ENCODE measurements at regions of chr10 and their contacts with region 1.

Region 1: DNA sequence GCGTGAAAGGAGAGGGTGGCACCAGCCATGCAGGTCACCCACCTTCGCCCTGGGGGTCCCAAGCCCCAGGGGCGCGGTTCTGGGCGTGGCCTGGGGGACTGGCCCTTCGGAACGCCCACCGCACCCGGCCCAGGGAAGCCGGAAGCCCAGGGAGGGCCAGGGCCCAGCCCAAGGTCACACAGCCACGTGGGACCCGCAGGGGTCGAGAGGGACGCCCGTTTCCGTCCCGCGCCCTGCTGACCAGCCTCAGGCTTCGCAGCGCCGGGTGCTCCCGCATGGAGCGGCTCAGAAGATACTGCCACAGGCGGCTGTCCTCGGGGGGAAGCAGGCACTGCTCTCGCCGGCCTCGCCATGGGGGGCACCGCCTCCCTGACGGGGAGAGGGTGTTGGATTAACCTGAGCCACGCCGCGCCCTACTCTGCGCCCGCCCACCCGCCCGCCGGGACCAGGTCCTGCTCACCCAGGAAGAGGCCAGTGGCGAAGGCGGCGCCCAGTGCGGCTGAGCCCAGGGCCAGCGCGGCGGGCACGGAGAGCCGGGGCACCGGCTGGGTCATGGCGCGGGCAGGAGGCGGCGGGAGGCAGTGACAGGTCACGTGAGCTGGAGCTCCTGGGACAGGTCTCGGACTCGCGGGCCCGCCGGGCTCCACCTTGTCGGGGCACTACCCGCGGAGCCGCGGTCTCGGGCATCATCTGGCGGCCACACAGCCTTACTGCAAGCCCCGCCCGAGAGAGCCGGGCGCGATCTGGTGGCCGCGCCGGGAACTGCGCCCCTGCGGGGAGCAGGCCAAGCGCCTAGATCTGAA is at the start of gene COMTD1:
- DNase-seq: peak; percentile 91
- H3K4me3 Mint-ChIP-seq: peak within 1 kb of the TSS; percentile 84
- H3K27ac Mint-ChIP-seq: peak within 1 kb of the TSS; percentile 93
- H3K4me1 Mint-ChIP-seq: peaks cover 27% of the 10 kb centered on the region
- H3K27me3 Mint-ChIP-seq: no peaks in the 10 kb centered on the region
- total RNA-seq, gene COMTD1: 36.4 and 36.9 TPM in 2 replicates

Region 2: DNA sequence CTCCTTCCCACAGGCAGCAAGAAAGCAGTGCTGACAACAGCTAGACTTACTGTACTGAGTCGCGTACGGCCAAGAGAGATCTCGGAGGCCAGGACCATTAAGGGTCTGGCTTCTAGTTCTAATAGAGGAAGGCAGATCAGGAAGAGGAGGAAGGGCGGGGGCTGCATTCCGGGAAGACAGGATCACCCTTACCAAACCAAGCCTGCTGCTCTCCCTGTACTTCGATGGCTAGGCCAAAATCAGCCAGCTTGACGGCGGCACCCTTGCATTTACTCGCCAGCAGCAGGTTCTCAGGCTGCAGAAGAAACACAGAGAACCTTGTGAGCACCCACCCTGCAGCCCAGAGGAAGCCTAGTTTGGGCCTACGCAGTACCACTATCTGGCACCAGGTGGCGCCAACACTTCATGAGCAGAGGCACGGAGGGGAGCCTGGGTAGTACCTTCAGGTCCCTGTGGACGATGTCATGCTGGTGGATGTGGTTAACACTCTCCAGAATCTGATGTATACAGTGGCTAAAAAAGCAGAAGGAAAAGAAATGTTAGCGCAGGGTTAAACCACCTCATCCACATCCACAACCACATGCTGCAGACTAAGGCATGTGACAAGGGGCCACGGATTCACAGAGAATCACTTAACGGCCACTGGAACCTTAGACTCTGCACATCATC is 1386.6 kb before region 1 on chr10:
- intact Hi-C with region 1: loop called (anchors 1 kb)
- DNase-seq: peak; percentile 88
- H3K4me3 Mint-ChIP-seq: peak overlapping the region; percentile 64
- H3K27ac Mint-ChIP-seq: peak overlapping the region; percentile 78
- H3K4me1 Mint-ChIP-seq: peaks cover 13% of the 10 kb centered on the region
- H3K27me3 Mint-ChIP-seq: peaks cover 1% of the 10 kb centered on the region

Region 3: DNA sequence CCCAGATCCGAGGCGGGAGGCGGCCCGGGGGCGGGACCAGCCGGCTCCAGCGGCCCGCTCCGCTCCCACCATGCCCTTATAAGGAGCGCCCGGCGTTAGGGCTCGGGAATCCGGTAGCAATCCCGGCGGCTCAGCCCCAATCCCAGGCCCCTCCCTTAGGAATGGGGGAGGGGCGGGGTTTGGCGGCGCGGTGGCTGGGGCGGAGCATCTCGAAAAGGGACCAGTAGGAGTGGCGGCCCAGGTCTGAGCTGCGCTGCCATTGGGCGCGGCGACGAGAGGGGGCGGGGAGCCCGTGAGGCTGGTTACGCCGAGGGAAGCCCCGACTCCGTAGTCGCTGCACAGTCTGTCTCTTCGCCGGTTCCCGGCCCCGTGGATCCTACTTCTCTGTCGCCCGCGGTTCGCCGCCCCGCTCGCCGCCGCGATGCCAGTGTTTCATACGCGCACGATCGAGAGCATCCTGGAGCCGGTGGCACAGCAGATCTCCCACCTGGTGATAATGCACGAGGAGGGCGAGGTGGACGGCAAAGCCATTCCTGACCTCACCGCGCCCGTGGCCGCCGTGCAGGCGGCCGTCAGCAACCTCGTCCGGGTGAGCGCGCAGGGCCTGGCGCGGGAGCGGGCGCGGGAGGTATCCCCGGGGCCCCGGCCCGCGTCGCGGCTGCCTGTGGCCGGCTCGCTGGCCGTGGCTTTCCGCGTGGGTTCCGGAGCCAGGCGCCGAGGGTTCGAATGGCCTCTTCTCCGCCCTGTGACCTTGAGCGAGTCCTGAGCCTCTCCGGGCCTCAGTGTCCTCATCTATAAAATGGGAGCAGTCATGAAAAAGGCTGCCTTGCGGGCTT is 1237.6 kb before region 1 on chr10 and contains the start of gene VCL:
- intact Hi-C with region 1: loop called (anchors 5 kb)
- DNase-seq: peak; percentile 95
- H3K4me3 Mint-ChIP-seq: peak within 1 kb of the TSS; percentile 98
- H3K27ac Mint-ChIP-seq: peak within 1 kb of the TSS; percentile 100
- H3K4me1 Mint-ChIP-seq: peaks cover 59% of the 10 kb centered on the region
- H3K27me3 Mint-ChIP-seq: no peaks in the 10 kb centered on the region
- total RNA-seq, gene VCL: 24.4 and 26.0 TPM in 2 replicates

Region 4: GRCh38 chr10:74244097-74244685 is 991.4 kb before region 1 on chr10:
- intact Hi-C with region 1: loop called (anchors 5 kb)
- DNase-seq: no peak
- H3K4me3 Mint-ChIP-seq: no peak overlapping the region
- H3K27ac Mint-ChIP-seq: no peak overlapping the region
- H3K4me1 Mint-ChIP-seq: no peaks in the 10 kb centered on the region
- H3K27me3 Mint-ChIP-seq: no peaks in the 10 kb centered on the region

Region 5: DNA sequence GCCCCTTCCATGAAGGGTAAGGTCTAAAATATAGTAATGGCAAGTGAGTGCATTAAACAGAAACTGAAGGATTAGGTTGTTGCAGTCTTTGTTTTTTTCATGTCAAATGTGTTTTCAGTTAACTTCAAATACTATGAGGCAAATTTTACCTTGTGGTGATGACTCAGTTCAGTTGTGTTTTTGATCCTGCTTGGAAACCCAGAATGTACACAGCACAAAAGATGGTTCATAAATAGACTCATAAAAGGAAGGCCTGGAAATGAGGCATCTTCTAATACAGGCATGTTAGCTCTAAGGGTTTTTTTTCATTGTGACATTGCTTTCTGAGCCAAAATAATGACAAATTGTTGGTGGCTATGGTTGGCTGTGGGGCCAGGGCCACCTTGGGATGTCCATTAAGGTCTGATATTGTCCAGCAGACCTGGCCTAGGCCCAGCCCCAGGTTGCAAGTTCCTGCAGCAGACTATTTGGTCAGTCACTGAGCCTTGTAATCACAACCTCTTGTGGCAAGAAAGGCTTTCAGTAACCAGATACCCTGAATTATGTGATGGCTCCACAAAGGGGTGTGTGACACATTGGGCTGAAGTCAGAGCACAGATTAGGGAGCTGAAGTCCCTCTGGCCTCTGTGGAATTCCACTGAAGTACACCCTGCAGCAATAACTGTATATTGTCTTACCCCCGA is 193.1 kb before region 1 on chr10:
- intact Hi-C with region 1: loop called (anchors 5 kb)
- DNase-seq: no peak
- H3K4me3 Mint-ChIP-seq: peak overlapping the region; percentile 19
- H3K27ac Mint-ChIP-seq: peak overlapping the region; percentile 91
- H3K4me1 Mint-ChIP-seq: peaks cover 41% of the 10 kb centered on the region
- H3K27me3 Mint-ChIP-seq: no peaks in the 10 kb centered on the region

Region 6: GRCh38 chr10:75187961-75188426 is 47.6 kb before region 1 on chr10:
- intact Hi-C with region 1: loop called (anchors 1 kb)
- DNase-seq: peak; percentile 53
- H3K4me3 Mint-ChIP-seq: no peak overlapping the region
- H3K27ac Mint-ChIP-seq: peak overlapping the region; percentile 23
- H3K4me1 Mint-ChIP-seq: peaks cover 5% of the 10 kb centered on the region
- H3K27me3 Mint-ChIP-seq: no peaks in the 10 kb centered on the region

Region 7: GRCh38 chr10:75272896-75273295 is 37.3 kb after region 1 on chr10:
- intact Hi-C with region 1: no loop called
- DNase-seq: no peak
- H3K4me3 Mint-ChIP-seq: no peak overlapping the region
- H3K27ac Mint-ChIP-seq: no peak overlapping the region
- H3K4me1 Mint-ChIP-seq: no peaks in the 10 kb centered on the region
- H3K27me3 Mint-ChIP-seq: peaks cover 5% of the 10 kb centered on the region